Heart left ventricle (tissue), 16 donors: ENCODE measurements at regions of chr19 and their contacts with region 1.

Region 1: DNA sequence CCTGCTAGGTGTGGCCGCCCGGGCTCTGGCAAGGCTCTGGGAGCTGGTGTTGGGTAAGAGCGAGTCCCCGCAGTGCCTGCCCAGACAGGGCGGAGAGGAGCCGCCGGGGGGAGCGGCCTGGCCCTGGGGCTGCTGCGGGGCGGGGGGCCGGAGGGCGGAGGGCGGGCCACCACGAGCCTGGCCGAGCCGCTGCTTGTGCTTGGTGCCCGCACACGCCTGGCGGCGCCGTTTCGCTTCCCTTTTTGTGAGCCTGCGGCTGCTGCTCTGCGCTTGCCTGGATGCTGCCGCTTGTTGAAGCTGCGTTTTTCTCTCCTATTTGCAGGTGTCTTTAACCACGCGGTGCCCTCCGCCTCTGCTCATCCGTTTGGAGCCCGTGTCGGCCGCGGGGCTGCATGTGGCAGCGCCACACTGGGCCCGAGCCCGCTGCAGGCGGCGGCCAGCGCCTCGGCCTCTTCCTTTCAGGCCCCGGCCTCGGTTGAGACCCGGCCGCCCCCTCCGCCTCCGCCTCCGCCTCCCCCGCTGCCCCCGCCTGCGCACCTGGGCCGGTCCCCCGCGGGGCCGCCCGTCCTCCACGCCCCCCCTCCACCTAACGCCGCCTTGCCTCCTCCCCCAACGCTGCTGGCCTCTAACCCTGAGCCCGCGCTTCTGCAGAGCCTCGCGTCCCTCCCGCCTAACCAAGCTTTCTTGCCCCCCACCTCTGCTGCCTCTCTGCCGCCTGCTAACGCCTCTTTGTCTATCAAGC is 8.5 kb downstream of the PLEKHJ1 start:
- DNase-seq: no peak
- ATAC-seq: no peak
- H3K4me3 ChIP-seq: no peak overlapping the region
- H3K27ac ChIP-seq: no peak overlapping the region
- H3K4me1 ChIP-seq: peaks cover 0 to 15% (median 3%) of the 10 kb centered on the region in 12 donors
- H3K27me3 ChIP-seq: no peaks in the 10 kb centered on the region
- CTCF ChIP-seq: no peak
- POLR2A ChIP-seq: no peak

Region 2: DNA sequence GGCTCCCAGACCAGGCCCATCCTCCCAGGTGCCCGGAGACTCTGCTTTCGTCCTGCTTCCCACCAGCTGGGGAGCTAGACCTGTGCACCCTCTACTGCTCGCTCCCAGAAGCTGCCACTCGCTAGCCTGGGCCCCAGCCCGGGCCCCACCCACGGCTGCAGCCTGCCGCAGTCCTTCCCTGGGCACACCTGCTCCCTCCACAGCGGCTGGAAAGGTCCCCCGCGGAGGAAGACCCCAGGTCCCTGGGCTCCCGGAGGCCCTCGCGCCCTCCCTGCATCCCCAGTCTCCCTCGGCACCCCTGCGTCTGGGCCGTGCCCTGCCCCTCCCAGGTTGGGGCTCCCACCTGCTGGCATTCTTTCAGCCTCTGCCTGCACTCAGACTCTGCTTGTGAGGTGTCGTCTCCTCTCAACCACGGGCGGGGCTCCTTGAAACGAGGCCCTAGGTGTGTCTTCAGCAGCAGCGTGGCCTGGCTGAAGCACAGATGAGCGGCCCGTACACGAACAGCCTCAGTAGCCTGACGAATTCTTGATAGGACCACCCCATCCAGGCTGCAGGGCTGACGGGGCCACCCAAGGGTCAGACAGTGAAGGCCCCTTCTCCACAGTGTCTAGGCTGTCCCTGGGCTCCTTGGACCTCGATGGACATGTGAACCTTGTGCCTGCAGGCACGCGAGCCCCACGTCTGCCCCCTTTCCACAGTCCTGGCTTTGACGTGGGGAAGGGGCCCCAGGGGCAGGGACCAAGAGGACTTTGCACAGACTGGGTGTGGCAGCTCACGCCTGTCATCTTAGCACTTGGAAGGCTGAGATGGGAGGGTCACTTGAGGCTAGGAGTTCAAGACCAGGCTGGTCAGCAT is 35.9 kb before region 1 on chr19:
- intact Hi-C with region 1: loop called in 1 of 10 experiments (anchors 5 kb)
- DNase-seq: no peak
- ATAC-seq: no peak
- H3K4me3 ChIP-seq: no peak overlapping the region
- H3K27ac ChIP-seq: no peak overlapping the region
- H3K4me1 ChIP-seq: peaks cover 5 to 37% (median 23%) of the 10 kb centered on the region in 12 donors
- H3K27me3 ChIP-seq: no peaks in the 10 kb centered on the region
- CTCF ChIP-seq: no peak
- POLR2A ChIP-seq: no peak